ENCODE measurements at regions of chr7 and their contacts with region 1.

Region 1: GRCh38 chr7:64951250-64951848 is 39.5 kb downstream of the ZNF117 start:
- DNase-seq: no peak
- H3K4me3 Mint-ChIP-seq: no peak overlapping the region
- H3K27ac Mint-ChIP-seq: no peak overlapping the region
- H3K4me1 Mint-ChIP-seq: peaks cover 3% of the 10 kb centered on the region
- H3K27me3 Mint-ChIP-seq: peaks cover 37% of the 10 kb centered on the region

Region 2: DNA sequence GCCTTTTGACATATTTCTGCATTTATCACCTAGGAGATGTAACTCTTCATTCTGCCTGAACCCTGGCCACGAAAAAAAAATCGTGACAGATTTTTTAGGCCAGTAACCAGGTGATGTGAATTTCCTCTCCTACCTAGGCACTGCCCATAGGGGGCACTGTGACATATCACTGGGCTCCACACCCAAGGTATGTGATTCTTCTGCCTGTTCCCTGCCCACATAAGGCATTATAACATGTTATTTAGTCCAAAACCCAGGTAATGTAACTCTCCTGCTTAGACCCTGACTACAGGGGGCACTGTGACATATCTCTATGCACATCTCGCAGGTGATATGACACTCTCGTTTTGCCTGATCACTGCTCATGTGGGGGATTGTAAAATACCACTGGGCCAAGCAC is 315.0 kb before region 1 on chr7:
- CTCF ChIA-PET with region 1: no interaction called
- intact Hi-C with region 1: loop called (anchors 2 kb)
- DNase-seq: peak; percentile 31
- H3K4me3 Mint-ChIP-seq: no peak overlapping the region
- H3K27ac Mint-ChIP-seq: no peak overlapping the region
- H3K4me1 Mint-ChIP-seq: no peaks in the 10 kb centered on the region
- H3K27me3 Mint-ChIP-seq: no peaks in the 10 kb centered on the region

Region 3: GRCh38 chr7:64807731-64808365 is 143.5 kb before region 1 on chr7:
- CTCF ChIA-PET with region 1: no interaction called
- intact Hi-C with region 1: no loop called
- DNase-seq: no peak
- H3K4me3 Mint-ChIP-seq: no peak overlapping the region
- H3K27ac Mint-ChIP-seq: no peak overlapping the region
- H3K4me1 Mint-ChIP-seq: peaks cover 2% of the 10 kb centered on the region
- H3K27me3 Mint-ChIP-seq: no peaks in the 10 kb centered on the region

Region 4: DNA sequence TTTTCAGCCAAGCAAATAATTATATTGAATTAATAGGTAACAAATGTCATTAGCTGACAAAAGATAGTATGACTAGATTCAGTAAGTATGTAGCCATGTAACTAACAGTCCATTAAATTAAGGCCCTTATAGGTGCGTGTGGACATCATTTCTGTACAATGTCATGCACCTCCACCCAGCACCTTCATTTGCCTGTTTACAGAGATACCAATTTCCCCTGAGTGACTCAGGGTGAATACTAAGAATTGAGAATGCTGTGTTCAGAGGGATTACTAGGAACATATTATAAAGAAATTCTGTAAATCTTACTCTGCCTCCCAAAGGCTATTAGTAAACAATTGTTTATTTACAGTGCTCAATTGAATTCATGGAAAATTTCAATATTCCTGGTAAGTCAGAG is 96.4 kb before region 1 on chr7:
- CTCF ChIA-PET with region 1: no interaction called
- intact Hi-C with region 1: no loop called
- DNase-seq: no peak
- H3K4me3 Mint-ChIP-seq: no peak overlapping the region
- H3K27ac Mint-ChIP-seq: no peak overlapping the region
- H3K4me1 Mint-ChIP-seq: no peaks in the 10 kb centered on the region
- H3K27me3 Mint-ChIP-seq: no peaks in the 10 kb centered on the region

Region 5: DNA sequence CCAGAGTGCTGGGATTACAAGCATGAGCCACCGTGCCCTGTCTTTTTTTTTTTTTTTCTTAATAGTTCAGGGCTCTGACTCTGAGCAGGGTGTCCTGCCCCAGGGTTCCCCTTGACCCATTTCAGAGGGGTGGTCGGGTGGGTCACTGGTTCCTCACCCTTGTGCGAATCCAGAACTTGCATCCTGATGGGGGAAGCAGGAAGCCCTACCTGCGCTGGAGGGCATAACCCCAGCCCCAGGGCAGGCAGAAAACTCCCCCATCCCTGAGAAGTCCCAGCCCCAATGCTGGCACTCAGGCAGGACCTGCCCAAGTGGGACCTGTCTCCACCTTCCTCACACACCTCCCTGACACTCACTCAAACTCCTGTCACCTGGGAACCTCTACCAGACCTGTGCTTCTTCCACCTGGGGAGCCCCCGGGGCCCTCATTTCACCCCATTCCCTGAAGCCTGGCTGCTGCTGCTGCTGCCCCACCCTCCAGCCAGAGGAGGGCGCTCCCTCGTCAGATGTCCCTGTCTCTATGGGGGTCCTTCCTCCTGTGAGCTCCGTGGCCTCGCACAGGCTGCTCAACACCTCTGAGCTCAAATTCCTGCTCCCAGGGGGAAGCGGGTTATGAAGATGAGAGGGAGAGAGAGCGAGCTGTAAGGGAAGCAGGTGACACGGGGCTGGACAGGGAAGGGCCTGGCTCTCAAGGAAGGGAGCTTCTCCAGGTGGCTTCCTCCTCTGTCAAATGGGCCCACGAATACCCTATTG is 63.4 kb before region 1 on chr7:
- CTCF ChIA-PET with region 1: interaction called, 5 read pairs
- intact Hi-C with region 1: loop called (anchors 1 kb)
- DNase-seq: peak; percentile 66
- H3K4me3 Mint-ChIP-seq: peak overlapping the region; percentile 77
- H3K27ac Mint-ChIP-seq: no peak overlapping the region
- H3K4me1 Mint-ChIP-seq: peaks cover 15% of the 10 kb centered on the region
- H3K27me3 Mint-ChIP-seq: peaks cover 62% of the 10 kb centered on the region

Region 6: GRCh38 chr7:65216459-65216858 is 265.1 kb after region 1 on chr7:
- CTCF ChIA-PET with region 1: no interaction called
- intact Hi-C with region 1: loop called (anchors 1 kb)
- DNase-seq: peak; percentile 74
- H3K4me3 Mint-ChIP-seq: no peak overlapping the region
- H3K27ac Mint-ChIP-seq: no peak overlapping the region
- H3K4me1 Mint-ChIP-seq: no peaks in the 10 kb centered on the region
- H3K27me3 Mint-ChIP-seq: no peaks in the 10 kb centered on the region

Region 7: GRCh38 chr7:65225422-65226006 is 274.2 kb after region 1 on chr7:
- CTCF ChIA-PET with region 1: no interaction called
- intact Hi-C with region 1: loop called (anchors 1 kb)
- DNase-seq: no peak
- H3K4me3 Mint-ChIP-seq: no peak overlapping the region
- H3K27ac Mint-ChIP-seq: no peak overlapping the region
- H3K4me1 Mint-ChIP-seq: no peaks in the 10 kb centered on the region
- H3K27me3 Mint-ChIP-seq: no peaks in the 10 kb centered on the region

Region 8: GRCh38 chr7:65307651-65308299 is 356.4 kb after region 1 on chr7:
- CTCF ChIA-PET with region 1: interaction called, 11 read pairs
- intact Hi-C with region 1: loop called (anchors 1 kb)
- DNase-seq: peak; percentile 54
- H3K4me3 Mint-ChIP-seq: no peak overlapping the region
- H3K27ac Mint-ChIP-seq: no peak overlapping the region
- H3K4me1 Mint-ChIP-seq: no peaks in the 10 kb centered on the region
- H3K27me3 Mint-ChIP-seq: no peaks in the 10 kb centered on the region

Region 9: DNA sequence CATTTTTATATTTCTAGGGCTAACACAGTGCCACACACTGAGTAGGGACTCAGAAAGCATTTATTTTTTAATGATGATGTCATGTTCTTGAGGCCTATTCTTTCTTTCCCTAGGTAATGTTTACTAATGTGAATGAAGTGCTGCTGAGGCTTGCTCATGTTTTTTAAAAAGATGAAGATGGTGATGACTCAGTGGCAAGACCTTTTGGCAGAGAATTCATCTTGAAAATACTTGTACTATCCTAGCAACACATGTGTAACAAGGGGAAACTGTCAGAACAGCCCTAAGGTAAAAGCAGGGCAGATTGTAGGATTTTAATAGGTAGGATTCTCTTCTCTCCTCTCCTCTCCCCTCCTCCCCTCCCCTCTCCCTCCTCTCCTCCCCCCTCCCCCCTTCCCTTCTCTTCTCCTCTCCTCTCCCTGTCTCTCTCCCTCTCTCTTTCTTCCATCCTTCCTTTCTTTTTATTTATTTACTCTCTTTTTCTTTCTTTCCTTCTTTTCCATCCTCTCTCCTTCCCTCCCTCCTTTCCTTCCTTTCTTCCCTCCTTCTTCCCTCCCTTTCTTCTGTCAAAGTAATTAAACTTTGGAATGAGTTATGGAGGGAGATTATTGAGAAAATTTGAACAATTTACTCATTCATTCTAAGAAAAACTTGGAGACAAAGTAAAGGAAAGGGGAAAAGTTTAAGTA is 497.6 kb after region 1 on chr7:
- CTCF ChIA-PET with region 1: no interaction called
- intact Hi-C with region 1: loop called (anchors 10 kb)
- DNase-seq: no peak
- H3K4me3 Mint-ChIP-seq: no peak overlapping the region
- H3K27ac Mint-ChIP-seq: no peak overlapping the region
- H3K4me1 Mint-ChIP-seq: no peaks in the 10 kb centered on the region
- H3K27me3 Mint-ChIP-seq: peaks cover 17% of the 10 kb centered on the region